AG04450 (cell line): ENCODE measurements at regions of chr19 and their contacts with region 1.

Region 1: GRCh38 chr19:24033301-24033962 is 53.6 kb upstream of the ZNF254 start:
- DNase-seq: peak; percentile 76
- H3K4me3 ChIP-seq: peak overlapping the region; percentile 85
- H3K27ac ChIP-seq: peak overlapping the region; percentile 100
- H3K27me3 ChIP-seq: no peaks in the 10 kb centered on the region
- CTCF ChIP-seq: peak; percentile 15; the same call in 1 of the 2 replicates

Region 2: DNA sequence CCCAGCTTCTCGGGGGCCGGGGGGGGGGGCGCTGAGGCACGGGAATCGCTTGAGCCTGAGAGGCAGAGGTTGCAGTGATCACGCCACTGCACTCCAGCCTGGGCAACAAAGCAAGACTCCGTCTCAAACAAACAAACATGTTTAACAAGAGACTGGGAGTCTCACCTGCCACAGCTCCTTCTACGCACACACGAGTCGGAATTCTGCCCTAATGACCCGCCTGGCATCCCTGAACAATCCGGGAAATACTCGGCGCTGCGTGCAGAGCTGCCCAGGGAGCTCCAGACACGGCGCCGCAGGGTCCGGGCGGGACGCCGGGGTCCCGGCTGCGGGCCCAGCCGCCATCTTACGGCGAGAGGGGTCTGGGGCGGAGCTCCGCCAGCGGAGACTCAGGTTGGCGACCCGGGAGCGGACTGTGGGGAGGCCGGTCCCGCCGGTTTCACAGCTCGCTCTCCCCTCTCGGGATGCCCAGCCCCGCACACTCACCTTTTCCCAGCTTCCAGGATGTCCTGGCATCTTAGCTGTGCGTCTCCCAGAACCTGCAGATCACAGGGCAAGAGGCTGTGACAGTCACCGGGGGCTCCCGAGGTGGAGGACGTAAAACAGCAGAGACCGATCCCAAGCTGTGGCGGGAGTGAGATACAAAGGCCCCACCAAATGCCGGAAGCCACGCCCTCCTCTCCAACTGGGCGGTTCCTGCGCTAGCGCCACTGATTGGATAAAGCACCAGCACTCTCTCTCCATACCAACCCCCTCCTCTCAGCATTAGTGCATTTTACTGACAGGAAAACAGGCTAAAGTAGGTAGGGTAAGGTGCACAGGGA is 759.6 kb before region 1 on chr19:
- CTCF ChIA-PET with region 1: no interaction called
- POLR2A ChIA-PET with region 1: interaction called, 16 read pairs
- DNase-seq: peak; percentile 57
- H3K4me3 ChIP-seq: peak overlapping the region; percentile 94
- H3K27ac ChIP-seq: peak overlapping the region; percentile 61
- H3K27me3 ChIP-seq: no peaks in the 10 kb centered on the region
- CTCF ChIP-seq: no peak

Region 3: DNA sequence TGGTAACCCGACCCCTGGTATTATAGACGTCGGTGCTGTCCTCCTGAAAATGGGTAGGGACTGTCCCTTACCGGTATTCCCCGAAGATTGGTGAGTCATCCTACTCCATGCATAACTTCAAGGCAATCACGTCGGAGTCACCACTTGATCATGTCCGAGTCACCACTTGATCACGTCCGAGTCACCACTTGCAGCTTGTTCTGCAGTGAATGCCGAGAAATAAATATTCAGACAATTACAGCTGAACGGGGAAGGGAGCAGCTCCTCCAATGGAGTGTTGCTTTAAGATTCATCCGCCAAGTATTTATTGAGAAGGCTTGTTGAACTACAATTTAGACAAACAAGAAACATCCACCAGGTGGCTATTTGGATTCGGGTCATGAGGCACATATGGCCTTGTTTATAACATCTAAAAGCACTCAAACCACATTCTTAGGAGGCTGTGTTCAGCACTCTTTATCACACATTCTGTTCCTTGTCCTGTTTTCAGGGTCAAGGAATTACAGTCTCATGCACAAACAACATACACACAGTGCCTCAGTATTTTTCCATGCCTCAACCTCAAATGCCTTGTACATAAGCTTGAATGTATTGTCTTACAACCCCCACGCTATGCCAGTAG is 75.7 kb before region 1 on chr19:
- CTCF ChIA-PET with region 1: no interaction called
- POLR2A ChIA-PET with region 1: no interaction called
- DNase-seq: peak; percentile 34
- H3K4me3 ChIP-seq: no peak overlapping the region
- H3K27ac ChIP-seq: peak overlapping the region; percentile 35
- H3K27me3 ChIP-seq: no peaks in the 10 kb centered on the region
- CTCF ChIP-seq: no peak

Region 4: DNA sequence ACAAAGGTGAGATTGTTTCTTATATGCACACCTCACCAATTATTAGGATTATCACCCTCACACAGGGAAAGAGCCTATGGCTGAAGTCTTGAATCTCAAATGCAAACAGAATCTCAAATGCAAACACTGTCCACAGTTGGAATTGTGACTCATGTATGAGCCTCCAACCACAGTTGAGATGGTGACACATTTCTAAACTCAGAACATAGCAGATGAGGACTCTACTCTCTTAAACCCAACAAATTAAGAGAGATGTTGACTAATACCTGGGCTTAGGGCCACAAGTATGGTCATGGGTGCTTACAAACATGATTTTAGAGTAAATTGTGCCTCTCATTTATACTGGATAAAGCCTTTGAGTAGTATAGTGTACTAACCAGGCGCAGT is 21.1 kb after region 1 on chr19:
- CTCF ChIA-PET with region 1: no interaction called
- POLR2A ChIA-PET with region 1: no interaction called
- DNase-seq: peak; percentile 58
- H3K4me3 ChIP-seq: no peak overlapping the region
- H3K27ac ChIP-seq: peak overlapping the region; percentile 2
- H3K27me3 ChIP-seq: no peaks in the 10 kb centered on the region
- CTCF ChIP-seq: no peak

Region 5: GRCh38 chr19:24074720-24075454 is 41.5 kb after region 1 on chr19:
- CTCF ChIA-PET with region 1: no interaction called
- POLR2A ChIA-PET with region 1: no interaction called
- DNase-seq: no peak
- H3K4me3 ChIP-seq: no peak overlapping the region
- H3K27ac ChIP-seq: no peak overlapping the region
- H3K27me3 ChIP-seq: no peaks in the 10 kb centered on the region
- CTCF ChIP-seq: no peak

Region 6: DNA sequence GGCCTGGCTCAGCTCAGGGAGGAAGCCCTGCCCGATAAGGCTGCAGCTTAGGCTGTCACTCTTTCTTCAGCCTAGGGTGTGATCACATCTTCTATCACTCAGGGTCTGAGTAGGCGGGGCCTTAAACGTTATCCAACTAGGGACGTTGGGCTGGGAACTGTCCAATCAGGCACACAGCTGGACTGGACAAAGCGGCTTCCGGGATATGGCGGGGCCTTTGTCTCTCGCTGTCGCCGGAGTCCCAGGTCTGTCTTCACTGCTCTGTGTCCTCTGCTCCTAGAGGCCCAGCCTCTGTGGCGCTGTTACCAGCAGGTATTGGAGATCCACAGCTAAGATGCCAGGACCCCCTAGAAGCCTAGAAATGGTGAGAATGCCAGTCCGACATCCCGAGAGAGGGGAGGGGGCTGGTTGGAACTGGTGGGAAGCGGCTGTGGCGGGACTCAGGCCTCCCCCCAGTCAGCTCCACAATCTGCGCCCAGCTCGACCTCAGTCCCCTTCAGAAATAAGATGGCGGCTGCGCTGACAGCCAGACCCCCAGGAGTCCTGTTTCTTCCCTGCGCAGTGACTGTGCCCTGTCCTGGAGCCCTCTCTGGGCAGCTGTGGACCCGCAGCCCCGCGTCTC is 53.7 kb after region 1 on chr19 and contains the start of gene ZNF254:
- CTCF ChIA-PET with region 1: no interaction called
- POLR2A ChIA-PET with region 1: interaction called, 13 read pairs
- DNase-seq: peak; percentile 82
- H3K4me3 ChIP-seq: peak within 1 kb of the TSS; percentile 96
- H3K27ac ChIP-seq: peak within 1 kb of the TSS; percentile 96
- H3K27me3 ChIP-seq: no peaks in the 10 kb centered on the region
- CTCF ChIP-seq: no peak
- polyA plus RNA-seq, gene ZNF254: 8.7 and 11.4 TPM in 2 replicates